ENCODE measurements at regions of chr20 and their contacts with region 1.

Region 1: DNA sequence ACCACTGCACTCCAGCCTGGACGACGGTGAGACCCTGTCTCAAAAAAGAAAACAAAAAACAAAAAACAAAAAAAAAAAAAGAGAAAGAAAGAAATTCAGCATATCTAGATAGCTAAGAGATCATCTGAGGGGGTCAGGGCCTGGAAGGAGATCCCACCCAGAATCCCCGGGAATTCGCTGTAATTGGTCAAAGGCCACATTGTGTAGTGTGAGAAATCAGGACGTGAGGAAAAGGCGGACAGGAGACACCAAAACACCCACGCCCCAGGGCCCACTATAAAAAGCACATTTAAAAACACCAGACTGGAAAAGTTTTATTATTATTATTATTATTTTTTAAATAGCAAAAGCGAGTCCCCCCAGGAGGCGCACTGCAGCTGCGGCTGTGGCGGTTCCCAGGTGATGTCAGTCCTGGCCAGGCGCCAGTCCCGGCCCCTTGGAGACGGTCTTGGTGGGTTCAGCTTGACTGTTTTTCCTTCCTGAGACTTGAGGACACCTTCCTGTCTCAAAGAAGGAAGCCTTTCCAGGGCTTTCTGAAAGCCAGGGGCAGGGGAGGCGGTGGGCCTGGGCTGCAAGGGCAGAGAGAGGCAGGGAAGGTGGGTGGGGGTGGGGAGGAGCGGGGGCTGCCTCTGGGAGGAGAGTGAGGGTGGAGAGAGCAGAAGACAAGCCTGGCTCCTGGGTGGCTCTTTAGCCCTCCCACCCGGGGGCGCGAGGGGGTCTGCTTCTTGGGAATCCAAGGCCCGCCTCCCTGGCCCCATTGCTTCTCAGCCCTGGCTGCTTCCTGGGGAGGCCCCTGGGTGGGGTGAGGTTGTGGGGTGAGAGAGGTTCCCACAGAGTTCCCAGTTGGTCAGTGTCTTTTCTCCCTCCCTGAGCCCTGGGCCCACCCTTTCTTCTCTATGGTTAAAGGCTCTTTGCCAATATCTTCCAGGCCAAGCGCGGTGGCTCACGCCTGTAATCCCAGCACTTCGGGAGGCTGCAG is 14.5 kb downstream of the TCF15 start:
- DNase-seq: no peak
- ATAC-seq: no peak
- H3K4me3 ChIP-seq: no peak overlapping the region
- H3K27ac ChIP-seq: no peak overlapping the region
- H3K4me1 ChIP-seq: no peaks in the 10 kb centered on the region
- H3K27me3 ChIP-seq: peaks cover 17% of the 10 kb centered on the region
- CTCF ChIP-seq: no peak

Region 2: GRCh38 chr20:380763-381580 is 214.6 kb before region 1 on chr20:
- CTCF ChIA-PET with region 1: no interaction called
- POLR2A ChIA-PET with region 1: no interaction called
- intact Hi-C with region 1: no loop called
- DNase-seq: peak; percentile 76
- ATAC-seq: peak; percentile 60
- H3K4me3 ChIP-seq: peak overlapping the region; percentile 80
- H3K27ac ChIP-seq: peak overlapping the region; percentile 85
- H3K4me1 ChIP-seq: peaks cover 36% of the 10 kb centered on the region
- H3K27me3 ChIP-seq: no peaks in the 10 kb centered on the region
- CTCF ChIP-seq: peak; percentile 33; the same call in 1 of the 2 replicates

Region 3: GRCh38 chr20:543369-544152 is 52.1 kb before region 1 on chr20 and contains the start of gene CSNK2A1:
- CTCF ChIA-PET with region 1: no interaction called
- POLR2A ChIA-PET with region 1: interaction called, 10 read pairs
- intact Hi-C with region 1: no loop called
- DNase-seq: peak; percentile 97
- ATAC-seq: peak; percentile 96
- H3K4me3 ChIP-seq: peak within 1 kb of the TSS; percentile 90
- H3K27ac ChIP-seq: peak within 1 kb of the TSS; percentile 54
- H3K4me1 ChIP-seq: peaks cover 19% of the 10 kb centered on the region
- H3K27me3 ChIP-seq: no peaks in the 10 kb centered on the region
- CTCF ChIP-seq: no peak
- total RNA-seq, gene CSNK2A1: 147 and 161 TPM in 2 replicates

Region 4: DNA sequence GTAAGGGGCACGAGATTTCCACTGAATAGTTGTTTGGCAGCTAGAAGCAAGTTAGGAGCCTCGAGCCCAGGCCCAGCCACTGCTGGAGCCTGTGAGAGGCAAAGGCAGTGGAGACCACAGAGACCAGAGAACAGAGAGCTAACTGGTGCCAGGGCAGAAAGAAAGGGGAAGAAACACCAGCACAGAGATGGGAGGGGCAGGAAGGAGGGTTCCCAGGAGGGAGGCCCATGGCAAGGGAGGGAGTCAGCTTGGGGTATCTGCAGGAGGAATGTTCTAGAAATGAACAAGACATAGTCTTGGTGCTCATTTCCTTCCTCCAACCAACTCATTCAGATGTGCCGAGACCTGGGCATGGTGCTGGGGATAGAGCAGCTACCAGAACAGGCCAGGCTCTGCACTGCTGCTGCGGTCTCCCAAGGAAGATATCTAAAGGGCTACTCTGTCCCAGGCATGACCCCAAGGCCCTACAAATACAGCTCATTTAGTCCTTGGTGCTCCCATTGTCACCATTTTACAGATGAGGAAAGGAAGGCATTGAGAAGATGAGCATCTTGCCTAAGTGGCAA is 309.9 kb after region 1 on chr20:
- CTCF ChIA-PET with region 1: no interaction called
- POLR2A ChIA-PET with region 1: no interaction called
- intact Hi-C with region 1: no loop called
- DNase-seq: no peak
- ATAC-seq: no peak
- H3K4me3 ChIP-seq: no peak overlapping the region
- H3K27ac ChIP-seq: no peak overlapping the region
- H3K4me1 ChIP-seq: no peaks in the 10 kb centered on the region
- H3K27me3 ChIP-seq: peaks cover 35% of the 10 kb centered on the region; the same call in 1 of the 2 replicates
- CTCF ChIP-seq: no peak